Activated CD8-positive, alpha-beta T cell treated with anti-CD3 and anti-CD28 coated beads for 36 hours (primary cell): ENCODE measurements at regions of chr17 and their contacts with region 1.

Region 1: GRCh38 chr17:65137021-65137991 is at the start of gene RGS9:
- DNase-seq: peak; percentile 84
- ATAC-seq: peak; percentile 97
- H3K4me3 Mint-ChIP-seq: peak within 1 kb of the TSS; percentile 47
- H3K27ac Mint-ChIP-seq: no peak within 1 kb of the TSS
- H3K4me1 Mint-ChIP-seq: peaks cover 18% of the 10 kb centered on the region
- H3K27me3 Mint-ChIP-seq: peaks cover 25% of the 10 kb centered on the region
- CTCF ChIP-seq: peak; percentile 89
- total RNA-seq, gene RGS9: 1.3 to 1.9 TPM

Region 2: GRCh38 chr17:65122836-65123756 is 14.2 kb before region 1 on chr17:
- CTCF ChIA-PET with region 1: interaction called, 29 read pairs
- POLR2A ChIA-PET with region 1: interaction called, 3 read pairs
- intact Hi-C with region 1: no loop called
- DNase-seq: peak; percentile 89
- ATAC-seq: peak; percentile 69
- H3K4me3 Mint-ChIP-seq: peak overlapping the region; percentile 81
- H3K27ac Mint-ChIP-seq: peak overlapping the region; percentile 97
- H3K4me1 Mint-ChIP-seq: peaks cover 22% of the 10 kb centered on the region
- H3K27me3 Mint-ChIP-seq: peaks cover 5% of the 10 kb centered on the region
- CTCF ChIP-seq: no peak

Region 3: GRCh38 chr17:65154770-65155621 is 17.7 kb after region 1 on chr17:
- CTCF ChIA-PET with region 1: interaction called, 18 read pairs
- POLR2A ChIA-PET with region 1: interaction called, 5 read pairs
- intact Hi-C with region 1: no loop called
- DNase-seq: no peak
- ATAC-seq: peak; percentile 92
- H3K4me3 Mint-ChIP-seq: no peak overlapping the region
- H3K27ac Mint-ChIP-seq: no peak overlapping the region
- H3K4me1 Mint-ChIP-seq: peaks cover 15% of the 10 kb centered on the region
- H3K27me3 Mint-ChIP-seq: peaks cover 3% of the 10 kb centered on the region
- CTCF ChIP-seq: no peak

Region 4: DNA sequence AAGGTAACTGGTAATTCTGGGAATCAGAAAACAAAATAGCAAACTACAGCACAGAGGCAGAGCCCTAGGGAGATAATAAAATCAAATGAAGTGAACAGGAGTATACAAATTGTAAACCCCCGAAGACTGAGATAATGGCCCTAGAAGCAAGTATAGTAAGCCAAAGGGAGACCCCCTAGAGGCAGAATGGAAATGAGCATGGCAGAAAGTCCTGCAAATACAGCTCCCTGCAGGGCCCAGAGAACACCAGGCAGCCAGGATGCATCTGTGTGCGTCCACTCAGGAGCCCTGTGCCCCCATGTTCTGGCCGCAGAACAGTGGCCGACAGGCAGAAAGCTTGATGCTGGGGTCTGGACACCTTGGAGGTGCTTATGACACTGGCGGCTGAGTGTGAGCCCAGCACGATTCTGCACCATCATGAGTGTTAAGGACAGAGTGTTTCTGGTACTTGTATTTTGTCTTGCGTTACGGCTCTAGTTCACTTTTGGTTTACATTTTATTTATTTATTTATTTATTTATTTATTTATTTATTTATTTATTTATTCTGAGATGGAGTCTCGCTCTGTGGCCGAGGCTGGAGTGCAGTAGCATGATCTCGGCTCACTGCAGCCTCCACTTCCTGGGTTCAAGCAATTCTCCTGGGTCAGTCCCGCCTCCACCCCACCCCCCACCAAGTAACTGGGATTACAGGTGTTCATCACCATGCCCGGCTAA is 48.5 kb after region 1 on chr17:
- CTCF ChIA-PET with region 1: interaction called, 11 read pairs
- POLR2A ChIA-PET with region 1: interaction called, 3 read pairs
- intact Hi-C with region 1: no loop called
- DNase-seq: no peak
- ATAC-seq: no peak
- H3K4me3 Mint-ChIP-seq: no peak overlapping the region
- H3K27ac Mint-ChIP-seq: no peak overlapping the region
- H3K4me1 Mint-ChIP-seq: peaks cover 26% of the 10 kb centered on the region
- H3K27me3 Mint-ChIP-seq: peaks cover 6% of the 10 kb centered on the region
- CTCF ChIP-seq: no peak

Region 5: GRCh38 chr17:65198653-65199382 is 61.5 kb after region 1 on chr17:
- CTCF ChIA-PET with region 1: interaction called, 13 read pairs
- POLR2A ChIA-PET with region 1: interaction called, 8 read pairs
- intact Hi-C with region 1: loop called (anchors 5 kb)
- DNase-seq: no peak
- ATAC-seq: no peak
- H3K4me3 Mint-ChIP-seq: no peak overlapping the region
- H3K27ac Mint-ChIP-seq: no peak overlapping the region
- H3K4me1 Mint-ChIP-seq: peaks cover 17% of the 10 kb centered on the region
- H3K27me3 Mint-ChIP-seq: peaks cover 1% of the 10 kb centered on the region
- CTCF ChIP-seq: peak; percentile 92